Adrenal gland (tissue), 19 donors: ENCODE measurements at regions of chr19 and their contacts with region 1.

Region 1: DNA sequence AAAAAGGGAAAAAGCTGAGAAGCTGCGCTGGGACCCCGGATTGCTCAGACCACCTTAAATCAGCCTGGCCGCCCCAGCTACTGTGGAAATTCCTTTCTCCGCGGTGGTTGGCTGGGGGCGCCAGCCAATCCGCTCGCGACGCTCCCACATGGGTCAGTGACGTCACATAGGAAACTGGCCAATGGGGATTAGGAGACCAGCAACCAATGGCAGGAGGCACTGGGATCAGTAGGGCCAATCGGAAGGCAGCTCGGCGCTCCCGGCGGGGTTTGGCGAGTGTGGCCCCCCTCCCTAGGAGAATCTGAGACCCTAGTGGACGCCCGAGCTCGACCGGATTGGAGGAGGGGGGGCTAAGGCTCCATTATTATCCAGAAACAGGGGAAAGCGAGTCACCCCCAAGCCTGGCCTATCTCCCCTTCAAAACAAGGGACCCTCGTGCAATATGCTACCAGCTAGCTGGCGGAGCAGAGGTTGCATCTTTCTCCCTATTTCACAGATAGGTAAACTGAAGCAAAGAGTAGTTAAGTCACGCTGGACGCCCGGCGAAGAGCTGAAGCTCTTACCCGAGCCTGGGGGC is 6.5 kb upstream of the TLE2 start:
- DNase-seq: peak; percentile 99 to 100 (median 100)
- H3K4me3 ChIP-seq: peak overlapping the region in 2 of 4 donors; percentile 47 to 59
- H3K27ac ChIP-seq: peak overlapping the region; percentile 70 to 95 (median 94)
- H3K4me1 ChIP-seq: peaks cover 26 to 32% of the 10 kb centered on the region in 2 donors
- H3K27me3 ChIP-seq: no peaks in the 10 kb centered on the region
- CTCF ChIP-seq: peak in 2 of 6 experiments; percentile 12 to 28
- POLR2A ChIP-seq: peak in 1 of 2 donors; percentile 77

Region 2: GRCh38 chr19:2977001-2977685 is 58.5 kb before region 1 on chr19 and contains the start of gene TLE6:
- intact Hi-C with region 1: loop called in 1 of 2 experiments (anchors 10 kb)
- DNase-seq: peak; percentile 97 to 99 (median 98)
- H3K4me3 ChIP-seq: peak within 1 kb of the TSS in 3 of 4 donors; percentile 33 to 61 (median 35)
- H3K27ac ChIP-seq: peak within 1 kb of the TSS in 4 of 5 donors; percentile 8 to 77 (median 28)
- H3K4me1 ChIP-seq: peaks cover 15 to 51% of the 10 kb centered on the region in 2 donors
- H3K27me3 ChIP-seq: no peaks in the 10 kb centered on the region
- CTCF ChIP-seq: no peak
- POLR2A ChIP-seq: no peak
- total RNA-seq, gene TLE6: 0.48 to 3.2 (median 1.8) TPM